T-cell (primary cell): ENCODE measurements at regions of chr19 and their contacts with region 1.

Region 1: DNA sequence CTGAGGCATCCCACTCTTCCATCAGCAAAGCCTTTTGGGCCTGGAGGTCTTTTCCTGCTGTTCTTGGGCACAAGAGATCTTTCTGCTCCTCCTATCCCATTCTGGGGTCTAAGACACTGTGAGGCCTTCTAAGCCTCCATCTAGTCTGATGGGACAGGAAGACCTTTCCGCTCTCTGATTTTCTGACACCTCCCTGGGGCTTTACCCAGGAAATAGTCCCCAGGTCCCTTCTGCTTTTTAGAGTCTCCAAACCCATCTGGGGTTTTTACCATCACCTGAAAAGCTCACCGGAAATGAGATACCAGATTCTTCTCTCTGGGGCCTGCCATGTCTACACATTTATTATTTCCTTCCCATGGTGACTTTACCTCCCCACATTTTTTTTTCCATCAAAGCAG is 21.1 kb downstream of the CLEC17A start:
- DNase-seq: peak in 1 of 35 experiments; percentile 12
- ATAC-seq: peak in 2 of 4 experiments; percentile 39 to 51
- H3K4me3 ChIP-seq: no peak overlapping the region
- H3K4me3 Mint-ChIP-seq: no peak overlapping the region
- H3K27ac ChIP-seq: no peak overlapping the region
- H3K27ac Mint-ChIP-seq: peak overlapping the region; percentile 34 to 75
- H3K4me1 ChIP-seq: no peaks in the 10 kb centered on the region
- H3K4me1 Mint-ChIP-seq: peaks cover 6 to 10% (median 9%) of the 10 kb centered on the region in 3 donors
- H3K27me3 ChIP-seq: peaks cover 0 to 2% of the 10 kb centered on the region in 2 experiments
- H3K27me3 Mint-ChIP-seq: no peaks in the 10 kb centered on the region

Region 2: DNA sequence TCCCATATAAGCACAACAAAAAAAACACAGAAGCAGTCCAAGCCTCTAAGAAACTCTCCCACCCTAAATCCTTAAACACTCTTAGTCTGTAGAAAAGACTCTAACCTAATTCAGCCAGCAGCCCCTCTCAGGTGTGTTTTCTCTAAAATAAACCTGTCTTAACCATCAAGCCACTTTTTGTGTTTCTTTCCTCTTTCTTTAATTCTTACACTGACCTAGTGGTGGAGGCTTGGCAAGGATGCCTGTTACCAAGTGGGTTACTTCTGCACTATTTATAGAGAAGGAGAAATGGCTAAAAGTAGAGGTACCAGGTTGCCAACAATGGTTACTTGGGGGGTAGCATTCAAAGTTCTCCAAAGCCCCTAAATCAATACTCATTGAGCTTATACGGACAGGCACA is 129.6 kb after region 1 on chr19:
- CTCF ChIA-PET with region 1: interaction called in 1 of 2 experiments, 10 read pairs
- POLR2A ChIA-PET with region 1: no interaction called
- DNase-seq: no peak
- ATAC-seq: no peak
- H3K4me3 ChIP-seq: no peak overlapping the region
- H3K4me3 Mint-ChIP-seq: no peak overlapping the region
- H3K27ac ChIP-seq: no peak overlapping the region
- H3K27ac Mint-ChIP-seq: no peak overlapping the region
- H3K4me1 ChIP-seq: no peaks in the 10 kb centered on the region
- H3K4me1 Mint-ChIP-seq: no peaks in the 10 kb centered on the region
- H3K27me3 ChIP-seq: peaks cover 0 to 8% of the 10 kb centered on the region in 2 experiments
- H3K27me3 Mint-ChIP-seq: no peaks in the 10 kb centered on the region